HEK293 (cell line): ENCODE measurements at regions of chr6 and their contacts with region 1.

Region 1: DNA sequence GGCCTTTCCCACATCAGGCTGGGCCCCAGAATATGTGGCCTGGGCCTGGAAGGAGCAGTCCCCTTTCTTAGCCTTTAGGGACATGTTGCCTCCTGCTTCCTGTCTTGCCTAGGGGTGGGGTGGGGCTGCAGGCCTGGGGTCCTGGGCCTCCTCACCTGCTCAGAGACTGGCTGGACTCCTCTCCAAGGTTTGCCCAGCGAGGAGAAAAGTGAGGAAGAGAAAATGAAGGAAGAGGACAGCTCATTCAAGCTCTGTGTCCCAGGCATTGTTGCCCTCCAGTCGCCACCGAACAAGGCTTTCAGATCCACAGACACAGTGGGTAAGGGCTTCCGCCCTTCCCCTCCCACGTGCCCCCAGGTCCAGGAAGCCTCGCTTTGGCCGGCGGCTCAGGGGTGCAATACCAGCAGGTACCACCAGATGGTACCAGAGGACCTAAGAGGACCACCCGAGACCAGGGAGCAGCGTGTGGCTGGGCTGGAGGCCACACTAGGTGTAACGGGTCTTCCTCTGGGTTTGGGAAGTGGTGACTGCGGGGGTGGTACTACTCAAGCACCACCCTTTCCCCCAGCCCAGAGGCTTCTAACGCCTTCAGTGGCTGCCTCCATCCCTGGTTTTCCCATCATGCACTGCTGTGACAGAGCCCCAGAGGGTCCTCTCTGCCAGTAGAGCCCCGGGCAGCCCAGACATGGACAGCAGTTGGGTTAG is 5.5 kb upstream of the BAK1 start:
- H3K4me3 ChIP-seq: no peak overlapping the region
- H3K27ac ChIP-seq: no peak overlapping the region; the same call in 1 of the 2 replicates
- H3K4me1 ChIP-seq: no peaks in the 10 kb centered on the region; the same call in 1 of the 2 replicates
- CTCF ChIP-seq: peak; percentile 91

Region 2: DNA sequence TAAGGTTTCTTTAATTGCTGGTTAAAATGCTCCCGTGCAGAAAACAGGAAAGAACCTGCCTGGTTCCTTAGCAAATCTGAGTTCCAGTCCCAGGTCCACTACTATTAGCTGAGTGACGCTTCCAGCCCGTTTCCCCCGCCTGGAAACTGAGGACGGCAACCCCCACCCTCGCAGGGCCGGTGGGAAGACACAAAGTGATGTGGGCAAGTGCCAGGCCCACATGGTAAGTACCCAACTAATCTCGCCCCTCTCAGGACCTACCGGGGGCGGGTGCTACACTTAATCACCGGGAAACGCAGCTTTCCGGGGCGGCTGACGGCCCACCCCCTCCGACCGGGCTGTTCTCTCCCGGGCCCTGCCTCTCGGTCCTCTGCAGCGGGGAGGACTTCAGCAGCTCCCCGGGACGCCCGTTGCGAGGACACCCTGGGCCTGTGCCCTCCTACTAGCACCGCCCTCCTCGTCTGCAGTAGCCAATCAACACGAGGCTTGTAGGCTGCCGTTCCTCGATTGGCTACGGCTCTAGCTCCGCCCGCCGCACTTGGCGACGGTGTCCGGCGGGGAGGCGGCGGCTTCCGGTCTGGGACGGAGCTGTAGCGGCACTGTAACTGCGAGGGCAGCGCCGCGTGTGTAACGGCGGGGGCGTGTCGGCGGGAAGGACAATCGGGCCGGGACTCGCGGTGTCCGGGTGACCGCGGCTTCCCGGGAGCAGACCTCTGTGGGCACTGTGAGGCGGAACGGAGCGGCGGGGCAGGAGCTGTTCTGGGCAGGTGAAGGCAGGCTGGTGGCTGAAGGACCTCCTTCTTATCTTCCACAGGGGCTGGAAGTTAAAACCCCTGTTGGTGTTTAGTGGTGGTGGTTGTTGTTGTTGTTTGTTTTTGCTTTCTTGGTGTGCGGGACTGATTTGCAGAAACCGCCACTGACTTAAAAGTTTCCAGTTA is 131.3 kb before region 1 on chr6 and contains the start of gene ZBTB9:
- CTCF ChIA-PET with region 1: no interaction called
- POLR2A ChIA-PET with region 1: no interaction called
- H3K4me3 ChIP-seq: peak within 1 kb of the TSS; percentile 54
- H3K27ac ChIP-seq: peak within 1 kb of the TSS; percentile 65; the same call in 1 of the 2 replicates
- H3K4me1 ChIP-seq: 0 out of 2 replicates have a peak, but pooled peaks cover 3% of the 10 kb centered on the region
- CTCF ChIP-seq: peak; percentile 24; the same call in 1 of the 2 replicates

Region 3: DNA sequence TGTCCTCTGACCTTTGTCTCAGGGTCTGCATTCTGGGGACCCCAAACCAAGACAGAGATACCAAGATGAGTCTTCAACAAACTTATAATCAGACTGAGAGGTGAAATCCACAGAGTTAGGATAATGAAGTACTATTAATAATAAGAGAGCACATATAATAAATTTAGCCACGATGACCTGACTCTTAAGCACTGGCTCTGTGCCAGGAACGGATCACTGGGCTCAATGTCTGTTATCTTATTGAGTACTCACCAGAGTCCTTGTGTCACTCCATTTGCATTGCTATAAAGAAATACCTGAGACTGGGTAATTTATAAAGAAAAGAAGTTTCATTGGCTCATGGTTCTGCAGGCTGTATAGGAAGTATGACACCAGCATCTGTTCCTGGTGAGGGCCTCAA is 16.6 kb after region 1 on chr6:
- CTCF ChIA-PET with region 1: interaction called, 24 read pairs
- POLR2A ChIA-PET with region 1: no interaction called
- H3K4me3 ChIP-seq: no peak overlapping the region
- H3K27ac ChIP-seq: no peak overlapping the region
- H3K4me1 ChIP-seq: no peaks in the 10 kb centered on the region
- CTCF ChIP-seq: no peak

Region 4: DNA sequence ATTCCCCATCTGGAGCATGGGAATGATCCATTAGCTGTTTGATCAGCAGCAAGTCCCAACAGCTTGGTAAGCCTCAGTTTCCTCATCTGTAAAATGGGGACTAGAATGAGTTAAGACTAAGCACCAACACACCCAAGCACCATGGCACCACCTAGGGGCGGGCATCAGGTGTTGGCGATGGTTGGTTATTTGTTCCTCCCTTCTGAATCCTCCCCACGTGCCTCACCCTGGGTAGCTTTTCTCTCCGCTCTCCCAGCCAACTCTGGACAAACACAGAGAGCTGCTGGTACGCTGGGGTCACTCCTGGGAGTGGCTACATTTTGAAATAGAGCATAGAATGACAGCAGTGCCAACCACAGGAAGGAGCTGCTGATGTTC is 22.2 kb after region 1 on chr6:
- CTCF ChIA-PET with region 1: interaction called, 10 read pairs
- POLR2A ChIA-PET with region 1: no interaction called
- H3K4me3 ChIP-seq: no peak overlapping the region
- H3K27ac ChIP-seq: no peak overlapping the region
- H3K4me1 ChIP-seq: no peaks in the 10 kb centered on the region
- CTCF ChIP-seq: peak; percentile 48; the same call in 1 of the 2 replicates

Region 5: GRCh38 chr6:33633462-33634158 is 48.1 kb after region 1 on chr6:
- CTCF ChIA-PET with region 1: interaction called, 14 read pairs
- POLR2A ChIA-PET with region 1: interaction called, 4 read pairs
- H3K4me3 ChIP-seq: peak overlapping the region; percentile 48
- H3K27ac ChIP-seq: no peak overlapping the region; the same call in 1 of the 2 replicates
- H3K4me1 ChIP-seq: peaks cover 7% of the 10 kb centered on the region
- CTCF ChIP-seq: no peak

Region 6: DNA sequence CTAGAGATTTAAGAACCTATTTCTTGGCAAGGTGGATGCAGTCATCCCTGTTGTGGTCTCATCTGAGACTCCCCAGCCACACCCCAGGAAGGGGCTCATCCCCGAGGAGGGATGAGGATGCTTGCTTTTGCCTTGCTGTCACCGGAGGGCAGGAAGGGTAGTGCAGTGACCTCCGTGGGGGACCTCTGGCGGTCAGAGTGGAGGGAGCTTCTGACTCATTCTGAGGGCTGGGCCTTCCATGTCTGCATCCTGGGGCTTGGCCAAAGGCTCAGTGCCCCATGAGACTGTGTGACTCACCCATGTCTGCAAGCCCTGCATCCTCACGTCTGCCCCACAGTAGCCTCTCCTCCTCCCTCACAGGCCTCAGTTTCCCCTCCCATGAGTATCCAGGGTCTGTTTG is 87.3 kb after region 1 on chr6:
- CTCF ChIA-PET with region 1: interaction called, 12 read pairs
- POLR2A ChIA-PET with region 1: no interaction called
- H3K4me3 ChIP-seq: no peak overlapping the region
- H3K27ac ChIP-seq: no peak overlapping the region
- H3K4me1 ChIP-seq: no peaks in the 10 kb centered on the region
- CTCF ChIP-seq: peak; percentile 44

Region 7: GRCh38 chr6:33700391-33701050 is 115.0 kb after region 1 on chr6:
- CTCF ChIA-PET with region 1: interaction called, 93 read pairs
- POLR2A ChIA-PET with region 1: interaction called, 3 read pairs
- H3K4me3 ChIP-seq: no peak overlapping the region
- H3K27ac ChIP-seq: no peak overlapping the region
- H3K4me1 ChIP-seq: peaks cover 5% of the 10 kb centered on the region; the same call in 1 of the 2 replicates
- CTCF ChIP-seq: peak; percentile 67; the same call in 1 of the 2 replicates

Region 8: GRCh38 chr6:33761922-33762629 is 176.5 kb after region 1 on chr6:
- CTCF ChIA-PET with region 1: interaction called, 32 read pairs
- POLR2A ChIA-PET with region 1: no interaction called
- H3K4me3 ChIP-seq: no peak overlapping the region
- H3K27ac ChIP-seq: peak overlapping the region; percentile 37; the same call in 1 of the 2 replicates
- H3K4me1 ChIP-seq: peaks cover 16% of the 10 kb centered on the region
- CTCF ChIP-seq: peak; percentile 95